CD8-positive, alpha-beta T cell (primary cell): ENCODE measurements at regions of chr5 and their contacts with region 1.

Region 1: DNA sequence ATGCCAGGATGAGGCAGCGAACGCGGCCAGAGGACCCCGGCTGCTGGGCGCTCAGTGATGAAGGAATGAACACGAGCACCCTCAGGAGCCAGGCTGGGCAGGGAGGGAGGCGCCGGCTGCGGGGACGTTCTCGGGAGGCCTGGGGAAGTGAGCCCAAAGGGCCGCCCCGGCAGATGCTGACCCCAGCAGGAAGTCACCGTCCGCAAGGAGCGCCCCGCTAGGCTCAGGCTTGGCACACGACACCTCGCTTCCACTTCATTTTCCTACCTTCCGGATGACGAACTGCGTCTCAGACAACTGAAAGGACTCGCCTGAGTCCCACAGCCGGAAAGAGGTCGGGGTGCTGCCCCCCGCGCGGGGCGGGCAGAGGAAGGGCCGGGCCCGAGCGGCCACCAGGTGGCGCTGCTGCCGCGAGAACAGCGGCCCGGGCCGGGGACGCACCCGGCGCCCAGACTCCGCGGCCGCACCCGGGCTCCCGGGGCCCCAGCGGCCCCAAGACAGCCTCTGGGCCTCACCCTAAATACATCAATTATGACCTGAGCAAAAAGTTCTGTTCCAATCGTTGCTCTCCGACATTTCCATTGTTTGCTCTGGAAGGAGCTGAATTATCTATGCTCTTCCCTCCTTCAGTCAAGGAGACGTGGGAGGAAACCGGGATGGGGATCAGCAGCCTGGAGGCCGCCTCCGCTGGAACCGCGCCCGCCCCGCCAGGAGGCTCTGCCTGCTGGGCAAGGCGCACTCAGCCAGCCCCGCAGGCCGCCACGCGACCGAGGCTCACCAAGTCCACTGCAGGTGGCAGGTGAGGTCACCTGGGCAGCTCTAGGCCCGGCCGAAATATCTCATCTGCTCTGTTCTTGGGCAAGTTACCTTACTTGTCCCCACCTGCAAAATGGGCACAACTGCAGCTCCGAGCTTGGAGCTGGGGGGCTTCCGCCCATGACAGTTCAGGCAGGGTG is 107.0 kb downstream of the ZNF354C start:
- DNase-seq: peak; percentile 38 to 85 (median 60)
- ATAC-seq: peak; percentile 93
- H3K4me3 ChIP-seq: peak overlapping the region; percentile 43 to 57
- H3K4me3 Mint-ChIP-seq: peak overlapping the region; percentile 58
- H3K27ac ChIP-seq: no peak overlapping the region
- H3K27ac Mint-ChIP-seq: no peak overlapping the region
- H3K4me1 ChIP-seq: peaks cover 10% of the 10 kb centered on the region
- H3K4me1 Mint-ChIP-seq: peaks cover 2% of the 10 kb centered on the region
- H3K27me3 ChIP-seq: no peaks in the 10 kb centered on the region
- H3K27me3 Mint-ChIP-seq: peaks cover 11% of the 10 kb centered on the region
- CTCF ChIP-seq: peak; percentile 95

Region 2: GRCh38 chr5:179177711-179178475 is 10.7 kb after region 1 on chr5:
- CTCF ChIA-PET with region 1: interaction called, 12 read pairs
- POLR2A ChIA-PET with region 1: no interaction called
- intact Hi-C with region 1: no loop called
- DNase-seq: no peak
- ATAC-seq: no peak
- H3K4me3 ChIP-seq: no peak overlapping the region
- H3K4me3 Mint-ChIP-seq: no peak overlapping the region
- H3K27ac ChIP-seq: no peak overlapping the region
- H3K27ac Mint-ChIP-seq: no peak overlapping the region
- H3K4me1 ChIP-seq: peaks cover 15% of the 10 kb centered on the region
- H3K4me1 Mint-ChIP-seq: peaks cover 8% of the 10 kb centered on the region
- H3K27me3 ChIP-seq: no peaks in the 10 kb centered on the region
- H3K27me3 Mint-ChIP-seq: peaks cover 24% of the 10 kb centered on the region
- CTCF ChIP-seq: no peak

Region 3: DNA sequence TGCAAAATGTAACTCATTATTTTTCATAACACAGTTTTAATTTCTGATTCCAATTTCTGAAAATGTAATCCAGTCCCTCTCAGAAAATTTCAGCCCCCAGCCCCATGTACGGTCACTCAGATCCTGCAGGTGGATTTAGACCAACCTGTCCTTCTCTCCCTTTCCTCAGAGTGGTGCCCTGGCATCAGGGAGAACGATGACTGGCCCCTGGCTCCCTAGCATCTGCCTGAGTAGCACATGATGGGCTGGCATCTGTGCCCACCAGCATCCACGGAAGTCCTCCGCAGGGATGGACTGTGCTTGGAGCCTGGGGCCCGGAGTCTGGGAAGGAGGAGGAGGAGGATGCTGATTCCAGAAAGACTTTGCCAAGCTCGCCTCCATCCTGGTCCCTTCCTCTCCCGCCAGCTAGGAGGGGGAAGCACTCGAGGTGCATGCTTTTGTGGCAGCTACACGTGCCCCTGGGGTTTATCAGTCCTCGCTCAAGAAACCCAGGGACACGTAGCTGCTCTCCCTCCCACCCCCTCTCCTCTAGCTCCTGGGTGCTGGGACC is 328.8 kb after region 1 on chr5:
- CTCF ChIA-PET with region 1: interaction called, 16 read pairs
- POLR2A ChIA-PET with region 1: no interaction called
- intact Hi-C with region 1: loop called in 1 of 2 experiments (anchors 1 kb)
- DNase-seq: no peak
- ATAC-seq: no peak
- H3K4me3 ChIP-seq: no peak overlapping the region
- H3K4me3 Mint-ChIP-seq: no peak overlapping the region
- H3K27ac ChIP-seq: no peak overlapping the region
- H3K27ac Mint-ChIP-seq: no peak overlapping the region
- H3K4me1 ChIP-seq: no peaks in the 10 kb centered on the region
- H3K4me1 Mint-ChIP-seq: no peaks in the 10 kb centered on the region
- H3K27me3 ChIP-seq: no peaks in the 10 kb centered on the region
- H3K27me3 Mint-ChIP-seq: no peaks in the 10 kb centered on the region
- CTCF ChIP-seq: no peak

Region 4: GRCh38 chr5:179668391-179668790 is 501.2 kb after region 1 on chr5:
- CTCF ChIA-PET with region 1: no interaction called
- POLR2A ChIA-PET with region 1: no interaction called
- intact Hi-C with region 1: loop called in 1 of 2 experiments (anchors 1 kb)
- DNase-seq: peak in 8 of 9 experiments; percentile 8 to 71 (median 46)
- ATAC-seq: peak; percentile 80
- H3K4me3 ChIP-seq: no peak overlapping the region
- H3K4me3 Mint-ChIP-seq: no peak overlapping the region
- H3K27ac ChIP-seq: no peak overlapping the region
- H3K27ac Mint-ChIP-seq: no peak overlapping the region
- H3K4me1 ChIP-seq: no peaks in the 10 kb centered on the region
- H3K4me1 Mint-ChIP-seq: no peaks in the 10 kb centered on the region
- H3K27me3 ChIP-seq: no peaks in the 10 kb centered on the region
- H3K27me3 Mint-ChIP-seq: no peaks in the 10 kb centered on the region
- CTCF ChIP-seq: peak; percentile 49